ENCODE measurements at regions of chr4 and their contacts with region 1.

Region 1: DNA sequence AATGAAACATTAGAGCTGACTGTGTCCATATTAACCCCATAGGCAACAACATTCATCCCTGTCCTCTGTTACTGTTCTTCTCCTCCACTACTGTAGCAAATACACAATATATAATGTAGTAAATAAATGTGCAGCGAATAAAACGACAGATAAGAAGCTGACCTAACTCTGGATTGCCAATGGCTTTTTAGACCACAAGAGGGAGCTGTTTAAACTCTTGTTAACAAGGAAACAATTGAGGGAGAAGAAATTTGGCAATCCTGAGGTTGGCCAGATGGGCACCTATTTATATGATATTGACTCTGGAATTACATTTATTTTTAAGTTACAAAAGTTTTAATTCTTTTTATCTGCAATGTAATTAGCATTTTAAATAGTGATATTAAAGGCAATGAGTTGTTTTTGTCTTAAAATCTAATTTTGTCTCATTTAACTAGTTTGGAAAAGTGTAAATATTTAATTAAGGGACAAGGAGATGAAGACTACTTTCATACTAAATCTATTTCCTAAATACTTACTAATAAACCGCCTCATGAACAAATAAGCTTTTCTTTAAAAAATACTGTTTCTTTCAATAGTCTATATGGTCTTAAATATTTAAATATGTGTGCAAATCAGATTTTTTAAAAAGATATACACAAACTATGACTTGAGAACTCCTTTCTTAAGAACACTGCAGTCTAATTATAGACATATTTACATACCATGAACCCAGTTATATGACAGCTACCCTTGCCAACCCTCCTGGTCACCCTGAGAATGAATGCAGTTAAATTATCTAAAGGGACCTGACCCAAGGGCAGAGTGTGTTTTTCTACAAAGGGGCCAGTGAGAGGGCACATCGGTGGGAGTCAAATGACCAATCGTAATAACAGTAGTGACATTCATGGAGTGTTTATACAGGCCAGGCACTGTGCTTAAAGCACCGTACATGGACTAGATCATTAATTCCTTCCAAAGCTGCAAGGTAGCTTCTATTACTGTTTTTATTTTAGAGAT is 52.9 kb upstream of the HPF1 start:
- DNase-seq: no peak
- H3K4me3 Mint-ChIP-seq: no peak overlapping the region
- H3K27ac Mint-ChIP-seq: no peak overlapping the region
- H3K4me1 Mint-ChIP-seq: no peaks in the 10 kb centered on the region
- H3K27me3 Mint-ChIP-seq: peaks cover 10% of the 10 kb centered on the region

Region 2: DNA sequence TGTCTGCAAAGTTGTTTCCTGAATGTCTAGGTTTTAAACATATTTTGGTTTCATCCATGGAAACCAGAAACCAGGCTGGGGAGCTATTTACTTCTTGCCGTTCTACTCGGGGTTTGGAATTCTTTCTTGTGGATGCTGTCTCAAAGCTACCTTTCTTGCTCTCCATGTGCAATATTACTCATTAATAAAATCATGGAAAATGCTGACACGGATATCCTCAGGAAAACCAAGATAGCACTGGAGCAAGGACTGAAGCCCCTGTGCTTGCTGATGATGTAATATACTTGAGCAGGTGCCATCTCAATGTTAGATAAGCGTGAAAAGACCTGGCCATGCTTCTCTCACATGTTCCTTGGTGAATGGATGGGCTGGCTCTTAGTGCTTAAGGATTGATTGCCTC is 11.4 kb before region 1 on chr4:
- CTCF ChIA-PET with region 1: interaction called, 15 read pairs
- POLR2A ChIA-PET with region 1: no interaction called
- intact Hi-C with region 1: no loop called
- DNase-seq: no peak
- H3K4me3 Mint-ChIP-seq: no peak overlapping the region
- H3K27ac Mint-ChIP-seq: no peak overlapping the region
- H3K4me1 Mint-ChIP-seq: peaks cover 7% of the 10 kb centered on the region
- H3K27me3 Mint-ChIP-seq: peaks cover 9% of the 10 kb centered on the region

Region 3: DNA sequence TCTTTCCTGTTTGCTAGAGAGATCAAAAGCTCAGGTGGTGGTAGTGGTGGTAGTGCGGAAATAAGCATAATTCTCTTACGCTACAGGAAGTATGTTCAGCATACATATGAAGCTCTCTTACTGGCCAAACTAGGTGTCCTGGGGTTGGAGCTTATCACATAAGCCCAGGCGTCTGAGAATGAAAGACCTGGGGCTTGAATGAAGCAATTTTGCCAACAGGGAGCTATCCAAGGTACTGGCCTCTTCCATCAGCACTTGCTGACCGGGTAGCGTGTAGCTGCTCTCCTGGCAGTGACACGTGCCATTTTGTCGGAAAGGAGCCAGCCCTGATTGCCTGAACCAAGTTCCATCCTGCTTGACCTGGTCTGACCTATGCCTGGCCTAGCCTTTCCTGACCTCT is 13.1 kb after region 1 on chr4:
- CTCF ChIA-PET with region 1: interaction called, 12 read pairs
- POLR2A ChIA-PET with region 1: no interaction called
- intact Hi-C with region 1: no loop called
- DNase-seq: peak; percentile 28
- H3K4me3 Mint-ChIP-seq: no peak overlapping the region
- H3K27ac Mint-ChIP-seq: no peak overlapping the region
- H3K4me1 Mint-ChIP-seq: peaks cover 9% of the 10 kb centered on the region
- H3K27me3 Mint-ChIP-seq: peaks cover 10% of the 10 kb centered on the region

Region 4: GRCh38 chr4:170040031-170040680 is 229.5 kb after region 1 on chr4:
- CTCF ChIA-PET with region 1: interaction called, 13 read pairs
- POLR2A ChIA-PET with region 1: no interaction called
- intact Hi-C with region 1: no loop called
- DNase-seq: no peak
- H3K4me3 Mint-ChIP-seq: no peak overlapping the region
- H3K27ac Mint-ChIP-seq: no peak overlapping the region
- H3K4me1 Mint-ChIP-seq: no peaks in the 10 kb centered on the region
- H3K27me3 Mint-ChIP-seq: no peaks in the 10 kb centered on the region

Region 5: GRCh38 chr4:170047771-170048354 is 237.2 kb after region 1 on chr4:
- CTCF ChIA-PET with region 1: interaction called, 82 read pairs
- POLR2A ChIA-PET with region 1: no interaction called
- intact Hi-C with region 1: loop called (anchors 1 kb)
- DNase-seq: peak; percentile 57
- H3K4me3 Mint-ChIP-seq: no peak overlapping the region
- H3K27ac Mint-ChIP-seq: no peak overlapping the region
- H3K4me1 Mint-ChIP-seq: no peaks in the 10 kb centered on the region
- H3K27me3 Mint-ChIP-seq: peaks cover 2% of the 10 kb centered on the region

Measured in activated CD4-positive, alpha-beta memory T cell treated with anti-CD3 and anti-CD28 coated beads for 36 hours (primary cell).